ENCODE measurements at regions of chr17 and their contacts with region 1.

Region 1: GRCh38 chr17:8288336-8289102 is at the start of gene RANGRF:
- DNase-seq: peak; percentile 91
- ATAC-seq: peak; percentile 91 to 97 (median 95)
- H3K4me3 ChIP-seq: peak within 1 kb of the TSS; percentile 67 to 85 (median 75)
- H3K27ac ChIP-seq: peak within 1 kb of the TSS; percentile 76 to 95 (median 92)
- H3K4me1 ChIP-seq: peaks cover 7 to 25% (median 17%) of the 10 kb centered on the region in 9 donors
- H3K27me3 ChIP-seq: no peaks in the 10 kb centered on the region
- CTCF ChIP-seq: no peak
- total RNA-seq, gene RANGRF: 20.7 to 28.2 (median 24.4) TPM

Region 2: GRCh38 chr17:8109661-8110464 is 178.7 kb before region 1 on chr17:
- intact Hi-C with region 1: loop called in 1 of 10 experiments (anchors 10 kb)
- DNase-seq: peak in 1 of 2 donors; percentile 59
- ATAC-seq: peak; percentile 57 to 74 (median 66)
- H3K4me3 ChIP-seq: peak overlapping the region in 6 of 10 donors; percentile 2 to 37 (median 20)
- H3K27ac ChIP-seq: no peak overlapping the region
- H3K4me1 ChIP-seq: peaks cover 0 to 14% (median 7%) of the 10 kb centered on the region in 9 donors
- H3K27me3 ChIP-seq: peaks cover 10 to 67% (median 59%) of the 10 kb centered on the region in 7 donors
- CTCF ChIP-seq: peak; percentile 42 to 91 (median 78)

Region 3: DNA sequence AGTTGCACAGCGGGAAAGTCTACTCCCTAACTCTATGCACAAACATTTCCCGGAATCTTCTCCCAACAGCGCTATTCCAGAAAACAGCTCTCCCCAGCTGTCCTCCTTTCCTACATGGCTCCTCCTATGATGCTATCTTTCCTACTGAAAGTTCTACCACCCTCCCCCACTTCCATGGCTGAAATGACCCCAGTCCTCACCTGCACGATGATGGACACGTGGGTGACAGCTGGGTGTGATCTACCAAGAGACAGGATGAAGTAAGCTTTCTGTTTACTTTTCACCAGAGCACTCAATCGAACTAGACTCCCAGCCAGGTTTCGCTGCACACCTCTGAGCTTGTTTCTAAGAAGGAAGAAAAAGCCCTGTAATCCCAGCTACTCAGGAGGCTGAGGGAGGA is 51.3 kb before region 1 on chr17:
- intact Hi-C with region 1: loop called in 1 of 10 experiments (anchors 10 kb)
- DNase-seq: no peak
- ATAC-seq: peak in 1 of 8 donors; percentile 9
- H3K4me3 ChIP-seq: no peak overlapping the region
- H3K27ac ChIP-seq: no peak overlapping the region
- H3K4me1 ChIP-seq: peaks cover 0 to 9% (median 0%) of the 10 kb centered on the region in 9 donors
- H3K27me3 ChIP-seq: no peaks in the 10 kb centered on the region
- CTCF ChIP-seq: no peak

Measured in heart right ventricle (tissue), 16 donors.